Common myeloid progenitor, CD34-positive (primary cell): ENCODE measurements at regions of chr12 and their contacts with region 1.

Region 1: GRCh38 chr12:49358483-49359141 is 8.7 kb upstream of the SPATS2 start:
- DNase-seq: peak; percentile 84 to 94 (median 89)
- H3K4me3 ChIP-seq: no peak overlapping the region
- H3K27ac ChIP-seq: no peak overlapping the region
- H3K4me1 ChIP-seq: no peaks in the 10 kb centered on the region
- H3K27me3 ChIP-seq: no peaks in the 10 kb centered on the region

Region 2: GRCh38 chr12:49288412-49288853 is 70.2 kb before region 1 on chr12:
- CTCF ChIA-PET with region 1: interaction called, 22 read pairs
- POLR2A ChIA-PET with region 1: no interaction called
- DNase-seq: peak; percentile 62 to 78 (median 72)
- H3K4me3 ChIP-seq: no peak overlapping the region
- H3K27ac ChIP-seq: no peak overlapping the region
- H3K4me1 ChIP-seq: no peaks in the 10 kb centered on the region
- H3K27me3 ChIP-seq: peaks cover 5 to 35% (median 14%) of the 10 kb centered on the region in 5 experiments

Region 3: GRCh38 chr12:49309391-49309790 is 49.2 kb before region 1 on chr12:
- CTCF ChIA-PET with region 1: no interaction called
- POLR2A ChIA-PET with region 1: no interaction called
- DNase-seq: no peak
- H3K4me3 ChIP-seq: no peak overlapping the region
- H3K27ac ChIP-seq: no peak overlapping the region
- H3K4me1 ChIP-seq: no peaks in the 10 kb centered on the region
- H3K27me3 ChIP-seq: peaks cover 0 to 6% (median 2%) of the 10 kb centered on the region in 5 experiments

Region 4: GRCh38 chr12:49331380-49332222 is 27.0 kb before region 1 on chr12:
- CTCF ChIA-PET with region 1: interaction called, 26 read pairs
- POLR2A ChIA-PET with region 1: no interaction called
- DNase-seq: peak in 1 of 3 donors; percentile 36
- H3K4me3 ChIP-seq: no peak overlapping the region
- H3K27ac ChIP-seq: no peak overlapping the region
- H3K4me1 ChIP-seq: peaks cover 0 to 10% (median 2%) of the 10 kb centered on the region in 4 experiments
- H3K27me3 ChIP-seq: peaks cover 0 to 64% (median 32%) of the 10 kb centered on the region in 5 experiments

Region 5: GRCh38 chr12:49347384-49348237 is 11.0 kb before region 1 on chr12:
- CTCF ChIA-PET with region 1: interaction called, 37 read pairs
- POLR2A ChIA-PET with region 1: no interaction called
- DNase-seq: peak; percentile 54 to 69 (median 69)
- H3K4me3 ChIP-seq: peak overlapping the region in 5 of 7 experiments; percentile 22 to 66 (median 34)
- H3K27ac ChIP-seq: no peak overlapping the region
- H3K4me1 ChIP-seq: peaks cover 0 to 49% (median 38%) of the 10 kb centered on the region in 4 experiments
- H3K27me3 ChIP-seq: peaks cover 4 to 81% (median 48%) of the 10 kb centered on the region in 5 experiments

Region 6: GRCh38 chr12:49515266-49515665 is 156.7 kb after region 1 on chr12:
- CTCF ChIA-PET with region 1: interaction called, 270 read pairs
- POLR2A ChIA-PET with region 1: interaction called, 3 read pairs
- DNase-seq: peak in 1 of 3 donors; percentile 10
- H3K4me3 ChIP-seq: no peak overlapping the region
- H3K27ac ChIP-seq: no peak overlapping the region
- H3K4me1 ChIP-seq: no peaks in the 10 kb centered on the region
- H3K27me3 ChIP-seq: no peaks in the 10 kb centered on the region

Region 7: GRCh38 chr12:49580572-49581535 is 222.2 kb after region 1 on chr12:
- CTCF ChIA-PET with region 1: interaction called, 16 read pairs
- POLR2A ChIA-PET with region 1: no interaction called
- DNase-seq: peak; percentile 37 to 61 (median 56)
- H3K4me3 ChIP-seq: no peak overlapping the region
- H3K27ac ChIP-seq: no peak overlapping the region
- H3K4me1 ChIP-seq: no peaks in the 10 kb centered on the region
- H3K27me3 ChIP-seq: no peaks in the 10 kb centered on the region